ENCODE measurements at regions of chr17 and their contacts with region 1.

Region 1: DNA sequence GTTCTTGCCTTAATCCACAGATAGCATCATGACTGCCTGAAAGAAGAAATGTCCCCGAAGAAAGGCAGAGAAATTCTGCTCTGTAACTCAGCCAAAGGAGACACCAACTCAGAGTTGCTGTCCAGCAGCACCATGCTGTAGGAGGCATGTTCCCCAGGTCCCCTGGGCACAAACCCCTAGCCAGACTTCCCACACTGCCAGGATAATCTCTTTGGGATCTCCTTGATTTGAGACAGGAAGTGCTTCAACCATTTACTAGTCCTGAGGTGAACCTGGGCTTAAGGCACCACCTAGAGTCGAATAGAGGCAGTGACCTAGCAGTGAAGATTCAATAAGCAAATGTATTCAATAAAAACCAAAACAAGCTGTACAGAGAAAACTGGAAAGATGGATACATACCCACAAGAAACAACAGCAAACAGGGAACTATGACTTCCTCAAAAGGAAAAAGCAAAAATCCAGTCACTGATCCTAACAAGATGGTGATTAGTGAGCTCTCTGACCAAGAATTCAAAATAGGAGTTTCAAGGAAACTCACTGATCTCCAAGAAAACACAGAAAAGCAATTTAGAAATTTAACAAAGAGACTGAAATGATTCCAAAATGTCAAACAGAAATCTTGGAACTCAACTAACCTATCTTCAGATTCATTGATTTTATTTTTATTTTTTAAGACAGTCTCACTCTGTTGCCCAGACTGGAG is 5.7 kb downstream of the OR4D2 start:
- DNase-seq: peak; percentile 56
- ATAC-seq: peak; percentile 96
- H3K4me3 Mint-ChIP-seq: no peak overlapping the region
- H3K27ac Mint-ChIP-seq: peak overlapping the region; percentile 38
- H3K4me1 Mint-ChIP-seq: peaks cover 40% of the 10 kb centered on the region
- H3K27me3 Mint-ChIP-seq: no peaks in the 10 kb centered on the region

Region 2: GRCh38 chr17:57861000-57861789 is 311.3 kb before region 1 on chr17:
- CTCF ChIA-PET with region 1: interaction called, 4 read pairs
- POLR2A ChIA-PET with region 1: no interaction called
- intact Hi-C with region 1: loop called in 1 of 2 experiments (anchors 2 kb)
- DNase-seq: peak; percentile 55
- ATAC-seq: peak; percentile 73
- H3K4me3 Mint-ChIP-seq: peak overlapping the region; percentile 60
- H3K27ac Mint-ChIP-seq: no peak overlapping the region
- H3K4me1 Mint-ChIP-seq: peaks cover 9% of the 10 kb centered on the region
- H3K27me3 Mint-ChIP-seq: peaks cover 13% of the 10 kb centered on the region

Region 3: GRCh38 chr17:57892146-57892828 is 280.2 kb before region 1 on chr17:
- CTCF ChIA-PET with region 1: no interaction called
- POLR2A ChIA-PET with region 1: no interaction called
- intact Hi-C with region 1: loop called in 1 of 2 experiments (anchors 1 kb)
- DNase-seq: peak; percentile 89
- ATAC-seq: peak; percentile 98
- H3K4me3 Mint-ChIP-seq: no peak overlapping the region
- H3K27ac Mint-ChIP-seq: no peak overlapping the region
- H3K4me1 Mint-ChIP-seq: peaks cover 3% of the 10 kb centered on the region
- H3K27me3 Mint-ChIP-seq: no peaks in the 10 kb centered on the region

Region 4: DNA sequence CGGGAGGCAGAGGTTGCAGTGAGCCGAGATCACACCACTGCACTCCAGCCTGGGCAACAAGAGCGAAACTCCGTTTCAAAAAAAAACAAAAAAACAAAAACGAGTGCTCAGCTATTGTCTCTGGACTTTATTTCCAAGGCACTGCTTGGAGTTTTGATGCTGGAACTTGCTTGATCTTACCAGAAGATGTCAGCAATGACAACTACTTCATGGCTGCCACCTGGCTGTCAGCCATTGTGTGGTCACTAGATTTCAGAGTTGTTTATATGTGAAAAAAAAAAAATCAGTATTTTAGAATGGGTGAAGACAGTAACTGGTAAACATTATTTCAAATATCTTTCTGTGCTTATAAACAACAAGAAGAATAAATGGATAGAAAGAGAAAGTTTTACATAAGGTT is 50.6 kb before region 1 on chr17:
- CTCF ChIA-PET with region 1: interaction called, 19 read pairs
- POLR2A ChIA-PET with region 1: no interaction called
- intact Hi-C with region 1: loop called (anchors 1 kb)
- DNase-seq: peak; percentile 49
- ATAC-seq: no peak
- H3K4me3 Mint-ChIP-seq: no peak overlapping the region
- H3K27ac Mint-ChIP-seq: no peak overlapping the region
- H3K4me1 Mint-ChIP-seq: peaks cover 7% of the 10 kb centered on the region
- H3K27me3 Mint-ChIP-seq: peaks cover 8% of the 10 kb centered on the region

Region 5: GRCh38 chr17:58156839-58157803 is 15.4 kb before region 1 on chr17:
- CTCF ChIA-PET with region 1: interaction called, 14 read pairs
- POLR2A ChIA-PET with region 1: no interaction called
- intact Hi-C with region 1: no loop called
- DNase-seq: peak; percentile 78
- ATAC-seq: peak; percentile 90
- H3K4me3 Mint-ChIP-seq: peak overlapping the region; percentile 83
- H3K27ac Mint-ChIP-seq: peak overlapping the region; percentile 84
- H3K4me1 Mint-ChIP-seq: peaks cover 47% of the 10 kb centered on the region
- H3K27me3 Mint-ChIP-seq: no peaks in the 10 kb centered on the region

Region 6: GRCh38 chr17:58200017-58200633 is 27.6 kb after region 1 on chr17:
- CTCF ChIA-PET with region 1: interaction called, 12 read pairs
- POLR2A ChIA-PET with region 1: no interaction called
- intact Hi-C with region 1: no loop called
- DNase-seq: peak; percentile 79
- ATAC-seq: peak; percentile 95
- H3K4me3 Mint-ChIP-seq: no peak overlapping the region
- H3K27ac Mint-ChIP-seq: no peak overlapping the region
- H3K4me1 Mint-ChIP-seq: no peaks in the 10 kb centered on the region
- H3K27me3 Mint-ChIP-seq: no peaks in the 10 kb centered on the region